ENCODE measurements at regions of chr2 and their contacts with region 1.

Region 1: DNA sequence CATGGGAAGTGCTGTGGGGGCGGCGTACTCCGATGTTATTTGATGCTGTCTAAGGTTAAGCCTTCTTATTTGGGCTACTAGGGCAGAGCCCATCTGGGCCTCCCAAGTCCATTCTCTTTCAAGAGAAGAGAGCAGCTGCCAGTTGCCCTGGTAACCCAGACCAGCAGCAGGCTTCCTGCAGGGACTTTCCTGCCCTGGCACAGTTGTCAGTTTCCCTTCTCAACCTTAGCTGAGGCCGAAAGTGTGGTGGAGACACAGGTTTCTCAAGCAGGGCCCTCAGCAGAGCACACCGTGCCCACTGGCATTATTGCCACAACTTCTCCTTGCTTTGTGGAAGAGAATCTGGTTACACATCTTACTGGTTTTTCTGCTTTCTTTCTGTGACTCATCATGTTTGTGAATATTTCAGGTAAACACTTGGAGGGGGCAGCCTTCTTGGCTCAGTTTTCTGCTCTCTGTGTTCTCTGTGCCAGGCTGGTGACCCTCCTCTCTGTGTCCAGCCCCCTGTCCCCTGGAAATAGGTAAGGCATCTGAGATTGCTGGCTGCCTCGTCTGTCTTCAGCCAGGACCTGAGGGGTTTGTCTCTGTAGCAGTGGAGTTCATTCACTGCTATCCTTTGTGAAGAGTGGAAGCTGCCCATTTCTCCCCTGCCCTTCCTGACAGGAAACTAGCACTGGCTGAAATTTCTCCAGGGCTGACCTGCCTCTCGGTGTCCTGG is 111.0 kb downstream of the B3GNT2 start:
- DNase-seq: peak; percentile 53
- ATAC-seq: peak; percentile 37
- H3K4me3 Mint-ChIP-seq: peak overlapping the region; percentile 7
- H3K27ac Mint-ChIP-seq: peak overlapping the region; percentile 85
- H3K4me1 Mint-ChIP-seq: peaks cover 94% of the 10 kb centered on the region
- H3K27me3 Mint-ChIP-seq: no peaks in the 10 kb centered on the region

Region 2: GRCh38 chr2:62065243-62065642 is 241.7 kb before region 1 on chr2:
- CTCF ChIA-PET with region 1: no interaction called
- POLR2A ChIA-PET with region 1: no interaction called
- DNase-seq: no peak
- ATAC-seq: no peak
- H3K4me3 Mint-ChIP-seq: no peak overlapping the region
- H3K27ac Mint-ChIP-seq: no peak overlapping the region
- H3K4me1 Mint-ChIP-seq: peaks cover 3% of the 10 kb centered on the region
- H3K27me3 Mint-ChIP-seq: no peaks in the 10 kb centered on the region

Region 3: GRCh38 chr2:62195421-62196277 is 111.3 kb before region 1 on chr2 and contains the start of gene B3GNT2:
- CTCF ChIA-PET with region 1: interaction called, 16 read pairs
- POLR2A ChIA-PET with region 1: interaction called, 11 read pairs
- DNase-seq: peak; percentile 88
- ATAC-seq: peak; percentile 75
- H3K4me3 Mint-ChIP-seq: peak within 1 kb of the TSS; percentile 96
- H3K27ac Mint-ChIP-seq: peak within 1 kb of the TSS; percentile 94
- H3K4me1 Mint-ChIP-seq: peaks cover 46% of the 10 kb centered on the region
- H3K27me3 Mint-ChIP-seq: peaks cover 5% of the 10 kb centered on the region
- total RNA-seq, gene B3GNT2: 41.2 to 44.3 TPM

Region 4: GRCh38 chr2:62202019-62202722 is 104.7 kb before region 1 on chr2:
- CTCF ChIA-PET with region 1: interaction called, 16 read pairs
- POLR2A ChIA-PET with region 1: interaction called, 6 read pairs
- DNase-seq: peak; percentile 50
- ATAC-seq: peak; percentile 14
- H3K4me3 Mint-ChIP-seq: peak overlapping the region; percentile 96
- H3K27ac Mint-ChIP-seq: peak overlapping the region; percentile 75
- H3K4me1 Mint-ChIP-seq: peaks cover 90% of the 10 kb centered on the region
- H3K27me3 Mint-ChIP-seq: no peaks in the 10 kb centered on the region